Sigmoid colon (tissue), 7 donors: ENCODE measurements at regions of chr6 and their contacts with region 1.

Region 1: DNA sequence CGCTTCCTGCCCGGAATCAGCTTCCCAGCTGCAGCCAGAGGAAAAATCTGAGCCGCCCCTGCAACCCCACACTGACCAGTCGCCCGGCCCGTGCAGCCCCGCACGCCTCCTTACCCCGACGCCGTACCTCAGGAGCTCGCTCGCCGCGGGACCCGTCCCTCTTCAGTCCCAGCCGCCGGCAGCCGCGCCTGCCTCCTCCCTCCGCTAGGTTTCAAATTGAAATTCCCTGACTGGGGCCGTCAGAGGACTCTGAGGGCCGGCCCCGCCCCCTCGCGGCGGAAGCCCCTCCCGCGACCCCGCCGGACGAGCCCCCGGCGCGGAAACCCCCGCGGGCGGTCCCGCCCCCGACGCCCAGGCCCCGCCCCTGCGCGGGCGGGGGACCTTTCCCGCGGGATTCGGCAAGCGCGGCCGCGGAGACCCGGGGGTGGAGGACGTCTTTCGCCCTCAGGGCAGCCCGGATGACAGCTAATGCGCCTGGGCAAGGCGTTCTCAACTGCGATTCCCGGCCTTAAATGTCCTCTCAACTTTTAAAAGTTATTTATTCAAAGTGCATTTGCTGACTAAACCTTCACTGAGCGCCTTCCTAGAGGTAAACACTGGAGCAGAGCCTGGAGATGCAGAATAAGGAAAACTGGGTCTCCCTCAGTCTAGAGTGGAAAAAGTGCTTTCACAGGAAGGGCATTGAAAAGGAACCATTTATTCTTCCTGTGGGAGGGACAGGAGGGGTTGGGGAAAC is at the start of gene EPB41L2:
- DNase-seq: peak; percentile 94
- H3K4me3 ChIP-seq: peak within 1 kb of the TSS; percentile 82 to 97 (median 93)
- H3K27ac ChIP-seq: peak within 1 kb of the TSS; percentile 81 to 93 (median 90)
- H3K4me1 ChIP-seq: peaks cover 0 to 11% (median 7%) of the 10 kb centered on the region in 4 donors
- H3K27me3 ChIP-seq: no peaks in the 10 kb centered on the region
- CTCF ChIP-seq: peak; percentile 11 to 54 (median 34)
- EP300 ChIP-seq: no peak
- POLR2A ChIP-seq: peak; percentile 54 to 67
- total RNA-seq, gene EPB41L2: 65.7 to 147 (median 114) TPM

Region 2: GRCh38 chr6:131116749-131117360 is 53.7 kb after region 1 on chr6:
- intact Hi-C with region 1: loop called (anchors 5 kb)
- DNase-seq: no peak
- H3K4me3 ChIP-seq: no peak overlapping the region
- H3K27ac ChIP-seq: no peak overlapping the region
- H3K4me1 ChIP-seq: peaks cover 0 to 3% (median 0%) of the 10 kb centered on the region in 4 donors
- H3K27me3 ChIP-seq: no peaks in the 10 kb centered on the region
- CTCF ChIP-seq: peak; percentile 36 to 46 (median 42)
- EP300 ChIP-seq: no peak
- POLR2A ChIP-seq: no peak

Region 3: DNA sequence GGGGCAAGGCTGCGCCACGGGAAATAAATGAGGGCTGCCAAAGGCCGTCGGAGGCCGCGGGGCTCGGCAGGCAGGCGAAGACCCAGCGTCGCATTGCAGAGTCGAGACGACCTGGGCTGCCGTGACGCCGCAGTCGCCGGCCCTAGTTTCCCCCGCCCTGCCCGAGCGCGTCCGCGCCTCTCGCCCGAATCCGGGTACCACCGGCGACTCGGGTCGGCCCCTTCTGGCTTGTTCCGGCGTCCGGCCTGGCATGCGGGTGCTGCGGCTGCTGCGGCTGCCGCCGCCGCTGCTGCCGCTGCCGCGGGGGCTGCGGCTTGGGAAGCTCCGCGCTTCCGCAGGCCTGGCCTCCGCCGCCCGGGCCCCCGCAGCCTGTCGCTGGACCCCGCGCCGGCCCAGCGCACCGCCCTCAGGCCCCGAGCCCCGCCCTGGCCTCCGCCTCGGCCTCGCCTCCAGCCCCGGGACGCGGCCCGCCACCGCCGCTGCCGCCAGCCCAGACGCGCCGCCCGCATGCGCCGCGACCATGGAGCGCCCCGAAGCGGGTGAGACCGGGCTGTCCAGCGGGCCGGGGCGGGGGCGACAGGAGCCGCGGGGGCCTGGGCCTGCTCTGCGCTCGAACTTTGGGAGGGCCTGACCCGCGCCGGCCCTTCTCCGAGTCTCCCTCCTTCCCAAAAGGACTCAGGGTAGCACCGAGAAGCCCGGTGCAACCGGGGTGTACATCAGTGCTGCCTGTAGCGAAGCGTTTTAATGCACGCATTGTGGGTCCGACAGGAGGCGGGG is 72.2 kb after region 1 on chr6 and contains the start of gene AKAP7:
- intact Hi-C with region 1: loop called (anchors 1 kb)
- DNase-seq: peak; percentile 84
- H3K4me3 ChIP-seq: peak within 1 kb of the TSS; percentile 66 to 88 (median 82)
- H3K27ac ChIP-seq: peak within 1 kb of the TSS; percentile 92 to 96 (median 96)
- H3K4me1 ChIP-seq: peaks cover 0 to 21% (median 10%) of the 10 kb centered on the region in 4 donors
- H3K27me3 ChIP-seq: no peaks in the 10 kb centered on the region
- CTCF ChIP-seq: no peak
- EP300 ChIP-seq: no peak
- POLR2A ChIP-seq: peak in 1 of 2 donors; percentile 22
- total RNA-seq, gene AKAP7: 18.7 to 23.8 (median 21.9) TPM

Region 4: GRCh38 chr6:131156411-131156810 is 93.2 kb after region 1 on chr6:
- intact Hi-C with region 1: no loop called
- DNase-seq: no peak
- H3K4me3 ChIP-seq: no peak overlapping the region
- H3K27ac ChIP-seq: no peak overlapping the region
- H3K4me1 ChIP-seq: no peaks in the 10 kb centered on the region
- H3K27me3 ChIP-seq: no peaks in the 10 kb centered on the region
- CTCF ChIP-seq: no peak
- EP300 ChIP-seq: no peak
- POLR2A ChIP-seq: no peak